ENCODE measurements at regions of chr2 and their contacts with region 1.

Region 1: GRCh38 chr2:196076778-196077568 is 8.3 kb upstream of the DNAH7 start:
- DNase-seq: no peak
- H3K4me3 ChIP-seq: no peak overlapping the region
- H3K27ac ChIP-seq: no peak overlapping the region
- H3K4me1 ChIP-seq: no peaks in the 10 kb centered on the region
- H3K27me3 ChIP-seq: no peaks in the 10 kb centered on the region
- CTCF ChIP-seq: no peak

Region 2: GRCh38 chr2:196171248-196171871 is 94.4 kb after region 1 on chr2 and contains the start of gene STK17B:
- intact Hi-C with region 1: loop called (anchors 10 kb)
- DNase-seq: peak; percentile 97
- H3K4me3 ChIP-seq: peak within 1 kb of the TSS; percentile 92
- H3K27ac ChIP-seq: peak within 1 kb of the TSS; percentile 98
- H3K4me1 ChIP-seq: no peaks in the 10 kb centered on the region
- H3K27me3 ChIP-seq: no peaks in the 10 kb centered on the region
- CTCF ChIP-seq: no peak
- total RNA-seq, gene STK17B: 13.9 to 40.5 TPM

Region 3: GRCh38 chr2:196277002-196277401 is 200.0 kb after region 1 on chr2:
- intact Hi-C with region 1: loop called (anchors 5 kb)
- DNase-seq: no peak
- H3K4me3 ChIP-seq: no peak overlapping the region
- H3K27ac ChIP-seq: peak overlapping the region; percentile 69
- H3K4me1 ChIP-seq: peaks cover 6% of the 10 kb centered on the region
- H3K27me3 ChIP-seq: no peaks in the 10 kb centered on the region
- CTCF ChIP-seq: peak; percentile 43

Region 4: GRCh38 chr2:196331143-196331542 is 254.2 kb after region 1 on chr2:
- intact Hi-C with region 1: loop called (anchors 5 kb)
- DNase-seq: peak; percentile 39
- H3K4me3 ChIP-seq: no peak overlapping the region
- H3K27ac ChIP-seq: no peak overlapping the region
- H3K4me1 ChIP-seq: no peaks in the 10 kb centered on the region
- H3K27me3 ChIP-seq: no peaks in the 10 kb centered on the region
- CTCF ChIP-seq: no peak

Measured in colonic mucosa (tissue), 4 donors.